A549 (cell line): ENCODE measurements at regions of chr3 and their contacts with region 1.

Region 1: GRCh38 chr3:32794487-32795308 is 23.1 kb upstream of the TRIM71 start:
- DNase-seq: peak in 1 of 2 experiments; percentile 24
- ATAC-seq: peak; percentile 69 to 76
- H3K4me3 ChIP-seq: no peak overlapping the region
- H3K27ac ChIP-seq: no peak overlapping the region
- H3K4me1 ChIP-seq: peaks cover 7% of the 10 kb centered on the region; the same call in 1 of the 3 replicates
- CTCF ChIP-seq: no peak
- EP300 ChIP-seq: no peak
- POLR2A ChIP-seq: no peak
- RAD21 ChIP-seq: no peak

Region 2: GRCh38 chr3:32822609-32823498 is 28.2 kb after region 1 on chr3:
- CTCF ChIA-PET with region 1: no interaction called
- POLR2A ChIA-PET with region 1: no interaction called
- DNase-seq: no peak
- ATAC-seq: no peak
- H3K4me3 ChIP-seq: no peak overlapping the region
- H3K27ac ChIP-seq: no peak overlapping the region
- H3K4me1 ChIP-seq: peaks cover 9% of the 10 kb centered on the region
- CTCF ChIP-seq: no peak
- EP300 ChIP-seq: no peak
- POLR2A ChIP-seq: no peak
- RAD21 ChIP-seq: no peak

Region 3: DNA sequence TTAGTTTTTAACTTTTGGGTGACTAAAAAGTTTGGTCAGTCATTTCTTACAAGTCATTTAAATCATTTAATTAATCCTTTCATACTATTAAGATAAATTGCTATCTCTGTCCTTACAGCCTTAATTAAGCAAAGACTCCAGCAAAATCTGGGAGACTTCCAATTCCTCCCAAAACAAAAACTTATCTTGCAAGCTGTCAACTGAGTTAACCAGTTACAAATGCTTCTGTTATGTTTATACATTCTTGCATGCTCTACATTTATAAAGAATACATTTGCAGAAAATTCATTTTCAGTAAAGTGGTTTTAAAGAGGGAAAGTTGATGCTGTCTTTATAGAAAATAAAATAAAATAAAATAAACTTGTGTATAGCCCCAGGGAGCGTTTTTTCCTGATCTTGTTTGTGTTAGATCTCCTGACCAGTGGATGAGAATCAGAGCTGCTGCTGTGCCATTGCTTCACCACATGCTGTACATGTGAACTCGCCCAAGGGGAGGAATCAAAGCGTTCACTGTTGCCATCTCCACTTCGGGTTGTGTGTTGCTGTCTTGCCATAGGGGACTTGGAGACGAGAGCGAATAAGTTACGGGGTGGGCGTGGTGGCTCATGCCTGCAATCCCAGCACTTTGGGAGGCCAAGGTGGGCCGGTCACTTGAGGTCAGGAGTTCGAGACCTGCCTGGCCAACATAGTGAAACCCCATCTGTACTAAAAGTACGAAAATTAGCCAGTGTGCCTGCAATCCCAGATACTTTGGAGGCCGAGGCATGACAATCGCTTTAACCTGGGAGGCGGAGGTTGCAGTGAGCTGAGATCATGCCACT is 162.3 kb after region 1 on chr3:
- CTCF ChIA-PET with region 1: no interaction called
- POLR2A ChIA-PET with region 1: interaction called, 10 read pairs
- DNase-seq: no peak
- ATAC-seq: no peak
- H3K4me3 ChIP-seq: no peak overlapping the region
- H3K27ac ChIP-seq: no peak overlapping the region
- H3K4me1 ChIP-seq: no peaks in the 10 kb centered on the region
- CTCF ChIP-seq: no peak
- EP300 ChIP-seq: no peak
- POLR2A ChIP-seq: no peak
- RAD21 ChIP-seq: no peak